Breast epithelium (tissue), 4 donors: ENCODE measurements at regions of chr9 and their contacts with region 1.

Region 1: GRCh38 chr9:127118597-127119319 is 3.7 kb downstream of the ANGPTL2 start:
- DNase-seq: peak in 1 of 2 donors; percentile 7
- H3K4me3 ChIP-seq: peak overlapping the region in 1 of 3 donors; percentile 76
- H3K27ac ChIP-seq: peak overlapping the region in 1 of 2 donors; percentile 79
- H3K4me1 ChIP-seq: no peaks in the 10 kb centered on the region
- H3K27me3 ChIP-seq: no peaks in the 10 kb centered on the region
- CTCF ChIP-seq: no peak
- POLR2A ChIP-seq: no peak

Region 2: GRCh38 chr9:127089631-127090081 is 29.1 kb before region 1 on chr9:
- intact Hi-C with region 1: loop called (anchors 1 kb)
- DNase-seq: peak in 1 of 2 donors; percentile 70
- H3K4me3 ChIP-seq: no peak overlapping the region
- H3K27ac ChIP-seq: peak overlapping the region; percentile 85 to 96
- H3K4me1 ChIP-seq: no peaks in the 10 kb centered on the region
- H3K27me3 ChIP-seq: no peaks in the 10 kb centered on the region
- CTCF ChIP-seq: no peak
- POLR2A ChIP-seq: no peak

Region 3: DNA sequence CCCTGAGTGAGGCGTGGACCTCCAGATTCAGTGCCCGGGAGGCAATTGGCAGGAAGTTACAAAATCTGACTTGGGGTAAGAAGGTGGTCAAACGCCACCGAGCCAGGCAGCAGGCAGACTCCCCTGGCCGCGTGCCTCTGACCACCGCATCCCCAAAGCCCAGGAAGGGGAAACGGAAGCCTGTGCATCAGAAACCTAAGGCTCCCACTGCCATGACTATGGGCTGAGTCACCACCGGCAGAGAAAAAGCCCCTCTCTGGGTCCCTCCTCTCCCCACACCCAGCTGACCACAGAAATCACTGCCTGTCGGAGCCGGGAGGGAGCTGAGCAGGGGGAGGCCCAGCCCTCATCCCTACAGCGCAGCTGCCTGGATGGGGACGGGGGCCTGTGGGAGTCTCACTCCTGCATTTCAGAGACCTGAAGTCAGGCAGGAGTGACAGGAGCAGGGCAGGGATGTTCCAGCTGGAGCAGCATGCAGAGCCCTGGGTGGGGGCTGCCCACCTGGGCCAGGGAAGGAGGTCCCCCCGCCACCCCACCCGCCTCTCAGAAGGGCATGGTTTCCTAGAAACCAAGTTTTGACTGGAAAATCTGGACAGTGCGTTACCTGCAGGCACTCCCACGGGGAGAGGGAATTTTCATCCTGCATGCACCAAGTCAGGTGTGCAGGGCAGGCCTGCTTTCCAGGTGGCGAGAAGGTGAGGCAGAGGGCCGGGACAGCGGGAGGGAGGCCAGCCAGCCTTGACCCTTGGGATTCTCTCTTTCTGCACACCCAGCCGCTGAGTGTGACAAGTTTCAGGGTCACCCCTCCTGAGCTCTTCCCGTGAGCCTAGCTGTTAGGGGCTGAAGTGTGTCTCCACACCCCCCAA is 400.8 kb after region 1 on chr9:
- intact Hi-C with region 1: no loop called
- DNase-seq: no peak
- H3K4me3 ChIP-seq: no peak overlapping the region
- H3K27ac ChIP-seq: peak overlapping the region; percentile 18 to 44
- H3K4me1 ChIP-seq: peaks cover 10 to 14% of the 10 kb centered on the region in 2 donors
- H3K27me3 ChIP-seq: no peaks in the 10 kb centered on the region
- CTCF ChIP-seq: no peak
- POLR2A ChIP-seq: no peak